ENCODE measurements at regions of chr17 and their contacts with region 1.

Region 1: GRCh38 chr17:60641810-60642220 is 35.8 kb upstream of the BCAS3 start:
- DNase-seq: peak; percentile 18
- H3K4me3 Mint-ChIP-seq: no peak overlapping the region
- H3K27ac Mint-ChIP-seq: no peak overlapping the region
- H3K4me1 Mint-ChIP-seq: peaks cover 17% of the 10 kb centered on the region
- H3K27me3 Mint-ChIP-seq: no peaks in the 10 kb centered on the region

Region 2: DNA sequence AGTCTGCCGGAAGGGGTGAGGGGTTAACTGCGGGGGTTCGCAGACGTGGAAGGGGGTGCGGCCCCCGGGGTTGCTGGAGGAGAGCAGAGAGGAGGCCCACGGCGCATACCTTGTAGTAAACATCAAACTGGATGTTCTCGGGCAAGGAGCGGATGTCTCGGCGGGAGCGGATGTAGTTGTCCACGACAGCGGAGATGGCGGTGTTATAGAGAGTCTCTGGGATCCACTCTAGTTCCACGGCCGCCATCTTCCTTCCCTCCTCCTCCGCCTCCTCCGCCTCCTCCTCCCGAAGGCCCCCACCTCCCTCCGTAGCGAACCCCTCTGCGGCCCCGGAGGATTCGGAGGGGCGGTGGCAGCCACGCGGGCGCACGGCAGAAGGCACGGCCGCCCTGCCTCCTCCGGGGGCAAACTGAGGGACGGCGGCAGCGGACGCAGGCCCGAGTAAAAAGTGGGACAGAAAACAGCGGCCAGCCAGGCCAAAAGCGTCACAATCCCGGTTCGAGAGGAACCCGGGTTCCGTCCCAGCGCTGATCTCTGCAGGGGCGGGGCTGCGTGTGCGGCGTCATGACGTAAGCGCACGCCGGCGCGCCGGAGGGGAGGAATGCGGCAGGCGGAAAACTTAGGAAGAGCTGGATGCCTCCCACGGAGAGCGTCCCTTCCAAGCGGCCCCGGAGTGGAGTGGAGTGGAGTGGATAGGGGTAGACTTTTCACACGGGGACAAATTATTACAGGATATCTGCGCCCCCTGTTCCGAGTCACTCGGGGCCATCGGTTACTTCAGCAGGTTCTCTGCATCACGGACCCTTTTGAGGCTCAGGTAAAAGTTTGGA is 115.9 kb before region 1 on chr17 and contains the start of gene APPBP2:
- intact Hi-C with region 1: loop called (anchors 5 kb)
- DNase-seq: peak; percentile 68
- H3K4me3 Mint-ChIP-seq: peak within 1 kb of the TSS; percentile 99
- H3K27ac Mint-ChIP-seq: peak within 1 kb of the TSS; percentile 92
- H3K4me1 Mint-ChIP-seq: peaks cover 29% of the 10 kb centered on the region
- H3K27me3 Mint-ChIP-seq: no peaks in the 10 kb centered on the region
- total RNA-seq, gene APPBP2: 23.2 and 26.9 TPM in 2 replicates

Region 3: DNA sequence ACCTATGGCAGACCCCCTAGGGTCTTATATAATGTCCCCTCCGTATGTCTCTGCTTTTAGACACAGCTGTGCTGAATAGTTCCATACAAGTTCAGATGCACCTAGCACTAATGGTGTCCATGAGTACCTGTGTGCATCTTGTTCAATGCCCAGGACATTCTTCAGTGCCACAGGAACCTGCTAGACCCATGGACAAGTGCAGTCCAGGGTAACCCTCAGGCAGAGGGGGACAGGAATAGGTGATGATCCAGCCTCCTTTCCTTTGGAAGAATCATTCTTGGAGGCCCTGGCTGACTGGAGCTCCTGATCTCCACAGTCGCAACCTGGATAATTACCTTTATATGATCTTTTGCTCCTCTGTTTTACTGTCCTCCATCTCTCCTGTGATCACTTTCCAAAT is 70.3 kb before region 1 on chr17:
- intact Hi-C with region 1: loop called (anchors 2 kb)
- DNase-seq: no peak
- H3K4me3 Mint-ChIP-seq: no peak overlapping the region
- H3K27ac Mint-ChIP-seq: no peak overlapping the region
- H3K4me1 Mint-ChIP-seq: peaks cover 2% of the 10 kb centered on the region
- H3K27me3 Mint-ChIP-seq: peaks cover 19% of the 10 kb centered on the region

Region 4: GRCh38 chr17:60599620-60600489 is 42.0 kb before region 1 on chr17 and contains the start of gene PPM1D:
- intact Hi-C with region 1: loop called (anchors 2 kb)
- DNase-seq: peak; percentile 97
- H3K4me3 Mint-ChIP-seq: peak within 1 kb of the TSS; percentile 96
- H3K27ac Mint-ChIP-seq: peak within 1 kb of the TSS; percentile 94
- H3K4me1 Mint-ChIP-seq: peaks cover 31% of the 10 kb centered on the region
- H3K27me3 Mint-ChIP-seq: no peaks in the 10 kb centered on the region
- total RNA-seq, gene PPM1D: 14.9 and 15.1 TPM in 2 replicates